Heart left ventricle (tissue), 16 donors: ENCODE measurements at regions of chr4 and their contacts with region 1.

Region 1: GRCh38 chr4:89294573-89295269 is 12.9 kb downstream of the GPRIN3 start:
- DNase-seq: no peak
- ATAC-seq: peak in 1 of 4 donors; percentile 30
- H3K4me3 ChIP-seq: no peak overlapping the region
- H3K27ac ChIP-seq: peak overlapping the region in 3 of 12 donors; percentile 47 to 92 (median 61)
- H3K4me1 ChIP-seq: peaks cover 3 to 97% (median 35%) of the 10 kb centered on the region in 12 donors
- H3K27me3 ChIP-seq: no peaks in the 10 kb centered on the region
- CTCF ChIP-seq: no peak
- POLR2A ChIP-seq: no peak

Region 2: DNA sequence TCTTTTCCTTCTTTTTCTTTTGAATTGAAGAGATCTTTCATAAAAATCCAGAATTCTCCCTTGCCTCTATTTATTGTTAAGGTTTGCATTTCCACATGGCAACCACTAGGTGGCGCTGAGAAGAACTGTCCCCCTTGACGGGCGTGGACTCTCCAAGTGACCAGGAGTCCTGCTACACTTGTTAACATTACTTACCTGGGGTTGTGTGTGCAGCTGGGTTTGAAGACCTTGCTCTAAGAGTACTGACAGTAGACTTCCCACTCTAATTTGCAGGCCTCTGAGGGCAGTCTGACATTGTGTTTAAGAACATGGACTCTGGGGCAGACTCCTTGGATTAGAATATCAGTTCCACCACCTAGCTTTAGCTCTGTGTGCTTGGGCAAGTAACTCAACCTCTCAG is 39.9 kb before region 1 on chr4:
- intact Hi-C with region 1: loop called in 3 of 10 experiments (anchors 5 kb)
- DNase-seq: no peak
- ATAC-seq: peak in 3 of 4 donors; percentile 25 to 47 (median 29)
- H3K4me3 ChIP-seq: no peak overlapping the region
- H3K27ac ChIP-seq: peak overlapping the region in 1 of 12 donors; percentile 8
- H3K4me1 ChIP-seq: peaks cover 0 to 56% (median 23%) of the 10 kb centered on the region in 12 donors
- H3K27me3 ChIP-seq: no peaks in the 10 kb centered on the region
- CTCF ChIP-seq: peak; percentile 51 to 80 (median 66)
- POLR2A ChIP-seq: no peak